Posterior vena cava (tissue), 2 donors: ENCODE measurements at regions of chr4 and their contacts with region 1.

Region 1: GRCh38 chr4:54217642-54218495 is 11.2 kb upstream of the PDGFRA start:
- DNase-seq: peak; percentile 93

Region 2: DNA sequence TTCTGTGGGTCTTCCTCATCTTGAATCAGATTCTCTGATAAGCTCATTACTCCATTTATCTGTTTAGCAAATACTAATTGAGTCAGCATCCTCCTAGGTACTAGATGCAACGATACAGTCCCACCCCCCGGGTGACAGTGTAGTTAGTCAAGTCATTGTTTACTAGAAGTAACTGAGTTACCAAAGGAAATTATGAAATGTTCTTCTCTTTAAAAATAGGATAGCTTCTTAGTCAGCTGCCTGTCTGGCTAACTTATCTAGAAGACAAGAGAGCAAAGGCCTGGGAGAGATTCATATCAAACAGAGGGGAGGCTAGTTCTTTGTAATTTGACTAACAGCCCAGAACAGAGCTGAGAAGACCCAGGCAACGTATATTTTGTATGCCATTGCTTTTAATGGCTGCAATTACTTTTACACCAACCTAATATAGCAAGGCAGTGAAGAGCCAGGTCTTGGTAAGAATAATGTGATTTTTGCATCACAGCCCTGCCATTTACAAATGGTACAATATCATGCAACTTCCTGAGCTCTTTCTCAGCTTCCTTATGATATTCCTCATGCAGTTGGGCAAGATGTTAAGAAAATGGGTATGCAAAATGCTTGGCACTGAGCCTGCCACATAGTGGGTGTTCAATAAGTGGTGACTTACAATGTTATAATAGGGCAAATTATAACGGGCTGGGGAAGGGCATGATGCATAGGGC is 303.4 kb before region 1 on chr4:
- intact Hi-C with region 1: loop called in 1 of 2 experiments (anchors 10 kb)
- DNase-seq: no peak

Region 3: DNA sequence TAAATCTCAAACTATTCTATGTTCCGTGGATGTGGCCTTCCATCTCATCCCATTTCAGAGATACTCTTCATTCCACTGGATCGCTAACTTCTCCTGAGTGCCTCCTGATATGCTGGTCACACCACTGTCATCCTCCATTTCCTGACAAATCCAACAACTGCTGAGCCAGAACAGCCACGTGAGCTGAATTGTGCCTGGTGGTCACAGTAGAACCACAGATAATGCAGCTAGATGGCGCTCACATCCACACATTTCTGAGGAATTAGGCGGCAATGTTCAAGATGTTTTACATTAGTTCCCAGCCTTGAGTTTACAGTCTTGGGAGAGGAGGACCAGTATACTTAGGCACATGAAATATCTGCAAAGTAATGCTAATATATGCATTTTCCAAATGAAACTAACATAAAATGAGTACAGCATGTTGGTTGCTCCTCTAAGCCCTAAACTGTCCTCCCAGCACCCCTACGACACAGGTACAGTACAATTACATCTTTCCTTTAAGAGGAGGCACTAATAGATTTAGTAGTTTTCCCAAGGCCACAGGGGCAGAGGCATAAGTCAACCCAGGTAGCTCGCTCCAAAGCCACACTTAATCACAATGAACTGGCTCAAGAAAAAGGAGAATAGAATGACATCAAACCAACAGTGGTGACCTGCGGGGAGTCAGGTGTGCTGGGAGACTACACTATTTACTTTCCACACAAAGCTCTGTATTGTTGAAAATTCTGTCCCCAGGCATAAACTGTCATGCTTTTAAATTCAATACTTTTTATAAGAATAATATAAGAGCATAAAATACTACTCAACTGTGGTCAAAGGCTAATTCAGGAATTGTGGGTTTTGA is 287.7 kb before region 1 on chr4:
- intact Hi-C with region 1: loop called in 1 of 2 experiments (anchors 5 kb)
- DNase-seq: peak; percentile 85

Region 4: GRCh38 chr4:54064295-54065111 is 153.4 kb before region 1 on chr4 and contains the start of gene CHIC2:
- intact Hi-C with region 1: loop called in 1 of 2 experiments (anchors 10 kb)
- DNase-seq: peak; percentile 99
- total RNA-seq, gene CHIC2: 21.9 to 26.8 TPM

Region 5: DNA sequence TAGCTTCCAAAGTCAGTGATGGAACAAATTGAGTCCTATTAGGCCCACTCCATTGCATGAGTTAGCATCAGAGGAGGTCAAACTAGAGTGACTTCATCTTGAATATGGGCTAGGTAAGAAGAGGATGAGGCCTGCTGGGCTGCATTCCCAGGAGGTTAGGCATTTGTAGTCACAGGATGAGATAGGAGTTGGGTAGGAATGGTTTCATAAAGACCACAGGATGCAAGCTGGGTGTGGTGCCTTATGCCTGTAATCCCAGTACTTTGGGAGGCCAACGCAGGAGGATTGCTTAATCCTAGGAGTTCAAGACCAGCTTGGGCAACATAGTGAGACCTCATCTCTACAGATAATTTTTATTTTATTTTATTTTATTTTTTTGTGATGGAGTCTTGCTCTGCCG is 38.0 kb after region 1 on chr4:
- intact Hi-C with region 1: no loop called
- DNase-seq: no peak